ENCODE measurements at regions of chr11 and their contacts with region 1.

Region 1: DNA sequence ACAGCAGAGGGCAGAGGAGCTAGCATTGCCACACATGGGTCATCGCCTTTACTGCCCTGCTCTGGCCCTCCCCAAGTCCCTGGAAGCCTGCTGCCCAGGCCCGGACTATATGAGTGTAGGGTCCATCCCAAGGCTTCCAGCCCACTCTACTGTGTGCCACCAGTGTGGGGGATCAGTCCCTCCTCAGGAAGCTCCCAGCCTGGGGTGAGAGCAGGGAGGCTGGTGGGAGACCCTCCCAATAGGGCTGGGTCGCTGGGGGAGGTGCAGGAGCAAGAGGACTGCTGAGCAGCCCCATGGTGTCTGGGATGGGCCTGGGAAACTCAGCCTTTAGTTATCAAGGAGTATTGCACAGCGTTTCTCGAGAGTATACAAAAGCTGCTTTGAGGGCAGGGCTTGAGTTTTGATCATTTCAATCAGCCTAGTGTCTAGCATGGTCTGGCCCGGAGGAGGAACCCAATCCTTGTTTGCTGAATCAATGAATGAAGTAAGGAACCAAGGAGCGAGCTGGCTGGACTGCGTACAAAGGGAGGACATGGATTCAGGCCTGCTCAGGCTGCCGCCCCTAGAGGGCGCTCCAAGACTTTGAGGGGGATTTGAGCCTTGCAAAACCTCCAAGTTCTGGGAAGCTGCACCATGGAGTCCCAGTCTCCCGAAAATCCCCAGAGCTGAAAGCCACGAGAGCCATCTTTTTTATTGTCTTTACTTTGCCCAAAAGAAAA is 89.0 kb upstream of the PARVA start:
- DNase-seq: peak; percentile 83
- H3K4me3 ChIP-seq: peak overlapping the region; percentile 27
- CTCF ChIP-seq: peak; percentile 94

Region 2: GRCh38 chr11:12192794-12193514 is 95.4 kb before region 1 on chr11:
- CTCF ChIA-PET with region 1: no interaction called
- POLR2A ChIA-PET with region 1: no interaction called
- DNase-seq: no peak
- H3K4me3 ChIP-seq: no peak overlapping the region
- CTCF ChIP-seq: no peak

Region 3: DNA sequence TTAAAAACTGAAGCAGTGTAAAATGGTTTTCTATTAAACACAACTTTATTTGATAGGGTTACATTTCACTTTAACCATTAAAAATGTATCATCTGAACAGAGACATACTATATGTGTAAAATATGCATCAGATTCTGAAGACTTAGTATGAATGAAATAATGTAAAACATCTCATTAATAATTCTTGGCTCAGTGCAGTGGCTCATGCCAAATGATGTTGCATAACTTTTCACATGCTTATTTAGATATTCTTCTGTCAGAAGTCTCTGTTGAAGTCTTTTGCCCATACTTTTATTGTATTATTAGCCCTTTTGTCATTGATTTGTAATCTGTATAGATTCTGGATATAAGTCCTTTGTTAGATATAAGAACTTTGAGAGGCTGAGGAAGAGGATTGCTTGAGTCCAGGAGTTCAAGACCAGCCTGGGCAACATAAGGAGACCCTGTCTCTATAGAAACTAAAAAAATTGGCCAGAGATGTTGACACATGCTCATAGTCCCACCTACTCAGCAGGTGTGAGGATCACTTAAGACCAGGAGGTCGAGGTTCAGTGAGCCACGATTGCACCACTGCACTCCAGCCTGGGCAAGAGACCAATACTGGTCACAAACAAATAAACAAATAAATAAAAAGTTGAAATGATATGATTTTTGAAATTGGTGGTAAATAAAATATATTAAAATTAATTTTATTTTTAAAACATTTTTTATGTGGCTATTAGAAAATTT is 15.2 kb after region 1 on chr11:
- CTCF ChIA-PET with region 1: interaction called, 63 read pairs
- POLR2A ChIA-PET with region 1: no interaction called
- DNase-seq: no peak
- H3K4me3 ChIP-seq: no peak overlapping the region
- CTCF ChIP-seq: no peak

Region 4: GRCh38 chr11:12331239-12331874 is 43.0 kb after region 1 on chr11:
- CTCF ChIA-PET with region 1: interaction called, 84 read pairs
- POLR2A ChIA-PET with region 1: interaction called, 4 read pairs
- DNase-seq: peak; percentile 38
- H3K4me3 ChIP-seq: no peak overlapping the region
- CTCF ChIP-seq: peak; percentile 59

Region 5: GRCh38 chr11:12540913-12541582 is 252.7 kb after region 1 on chr11:
- CTCF ChIA-PET with region 1: interaction called, 15 read pairs
- POLR2A ChIA-PET with region 1: no interaction called
- DNase-seq: peak; percentile 83
- H3K4me3 ChIP-seq: no peak overlapping the region
- CTCF ChIP-seq: peak; percentile 65

Region 6: GRCh38 chr11:12900496-12900895 is 612.1 kb after region 1 on chr11:
- CTCF ChIA-PET with region 1: interaction called, 13 read pairs
- POLR2A ChIA-PET with region 1: no interaction called
- DNase-seq: peak; percentile 89
- H3K4me3 ChIP-seq: no peak overlapping the region
- CTCF ChIP-seq: no peak